Mammary epithelial cell (primary cell): ENCODE measurements at regions of chr12 and their contacts with region 1.

Region 1: GRCh38 chr12:97061171-97061570 is 154.1 kb downstream of the NEDD1 start:
- DNase-seq: no peak
- H3K4me3 ChIP-seq: no peak overlapping the region
- H3K27ac ChIP-seq: no peak overlapping the region
- H3K4me1 ChIP-seq: no peaks in the 10 kb centered on the region
- H3K27me3 ChIP-seq: peaks cover 3% of the 10 kb centered on the region
- CTCF ChIP-seq: no peak

Region 2: DNA sequence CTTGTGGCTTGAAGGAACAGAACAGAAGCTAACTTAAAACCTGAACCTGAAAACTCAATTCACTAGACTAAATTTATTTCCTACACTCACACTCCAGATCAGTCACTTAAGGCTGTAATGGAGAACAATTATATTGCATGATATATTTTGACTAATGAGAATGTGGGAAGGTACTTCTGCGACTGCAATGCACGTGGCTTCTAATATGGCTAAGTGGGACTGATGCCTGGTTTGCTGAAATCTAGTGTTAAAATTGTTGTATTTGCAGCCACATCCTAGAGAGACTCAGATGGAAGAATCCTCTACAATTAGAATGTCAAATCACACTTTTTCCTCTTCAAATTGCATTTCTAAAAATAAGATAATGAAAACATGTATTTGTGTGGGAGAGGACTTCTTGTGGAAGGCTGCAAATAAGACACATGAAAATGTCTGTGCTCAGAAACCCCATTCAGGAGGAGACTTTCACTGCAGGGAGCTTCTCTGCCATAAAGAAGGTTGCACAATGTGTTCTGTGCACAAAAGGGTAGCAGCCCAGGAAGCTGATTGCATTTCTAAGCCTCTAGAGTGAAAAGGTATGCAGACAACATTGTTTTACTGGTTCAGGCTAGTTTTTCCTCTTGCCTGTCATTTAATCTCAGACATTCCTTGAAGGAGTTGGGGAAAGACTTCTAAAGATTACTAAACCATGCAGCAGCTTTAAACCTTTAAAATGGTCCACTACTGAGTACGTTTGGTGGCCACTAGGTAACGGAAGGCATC is 70.2 kb after region 1 on chr12:
- CTCF ChIA-PET with region 1: no interaction called
- dilution Hi-C with region 1: no loop called
- in situ Hi-C with region 1: no loop called
- intact Hi-C with region 1: loop called (anchors 2 kb)
- DNase-seq: no peak
- H3K4me3 ChIP-seq: no peak overlapping the region
- H3K27ac ChIP-seq: no peak overlapping the region
- H3K4me1 ChIP-seq: no peaks in the 10 kb centered on the region
- H3K27me3 ChIP-seq: no peaks in the 10 kb centered on the region
- CTCF ChIP-seq: no peak